Vagina (tissue), 2 donors: ENCODE measurements at regions of chr13 and their contacts with region 1.

Region 1: GRCh38 chr13:45047394-45048310 is 58.3 kb downstream of the GPALPP1 start:
- DNase-seq: no peak
- H3K4me3 ChIP-seq: peak overlapping the region; percentile 30 to 36
- H3K27ac ChIP-seq: no peak overlapping the region
- H3K4me1 ChIP-seq: peaks cover 17% of the 10 kb centered on the region
- H3K27me3 ChIP-seq: no peaks in the 10 kb centered on the region
- CTCF ChIP-seq: peak; percentile 80 to 88 (median 88)
- POLR2A ChIP-seq: no peak

Region 2: GRCh38 chr13:44894001-44894780 is 153.5 kb before region 1 on chr13:
- intact Hi-C with region 1: no loop called
- DNase-seq: no peak
- H3K4me3 ChIP-seq: no peak overlapping the region
- H3K27ac ChIP-seq: no peak overlapping the region
- H3K4me1 ChIP-seq: no peaks in the 10 kb centered on the region
- H3K27me3 ChIP-seq: no peaks in the 10 kb centered on the region
- CTCF ChIP-seq: no peak
- POLR2A ChIP-seq: no peak

Region 3: DNA sequence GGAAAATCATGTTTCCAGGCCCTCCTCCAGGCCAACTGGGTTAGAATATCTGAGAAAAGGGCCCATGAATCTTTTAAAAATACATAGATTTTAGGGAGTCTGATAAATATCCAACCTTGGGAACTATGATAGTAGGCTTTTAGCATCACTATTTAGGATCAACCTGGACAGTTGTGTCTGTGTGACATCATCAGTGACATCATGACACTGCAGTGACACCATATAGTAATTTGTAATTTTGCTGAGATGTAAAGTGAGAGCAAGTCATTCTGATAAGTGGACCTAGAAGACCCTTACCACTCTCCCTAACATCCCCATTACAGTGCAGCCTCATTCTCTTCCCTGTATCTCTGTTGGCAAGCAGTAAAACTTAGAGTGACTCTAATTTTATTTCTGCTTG is 44.2 kb before region 1 on chr13:
- intact Hi-C with region 1: no loop called
- DNase-seq: no peak
- H3K4me3 ChIP-seq: no peak overlapping the region
- H3K27ac ChIP-seq: no peak overlapping the region
- H3K4me1 ChIP-seq: no peaks in the 10 kb centered on the region
- H3K27me3 ChIP-seq: no peaks in the 10 kb centered on the region
- CTCF ChIP-seq: no peak
- POLR2A ChIP-seq: no peak

Region 4: GRCh38 chr13:45206340-45206739 is 158.7 kb after region 1 on chr13:
- intact Hi-C with region 1: no loop called
- DNase-seq: no peak
- H3K4me3 ChIP-seq: no peak overlapping the region
- H3K27ac ChIP-seq: peak overlapping the region; percentile 27
- H3K4me1 ChIP-seq: peaks cover 27% of the 10 kb centered on the region
- H3K27me3 ChIP-seq: no peaks in the 10 kb centered on the region
- CTCF ChIP-seq: no peak
- POLR2A ChIP-seq: no peak

Region 5: GRCh38 chr13:45301243-45301642 is 253.6 kb after region 1 on chr13:
- intact Hi-C with region 1: loop called (anchors 10 kb)
- DNase-seq: no peak
- H3K4me3 ChIP-seq: no peak overlapping the region
- H3K27ac ChIP-seq: no peak overlapping the region
- H3K4me1 ChIP-seq: no peaks in the 10 kb centered on the region
- H3K27me3 ChIP-seq: no peaks in the 10 kb centered on the region
- CTCF ChIP-seq: no peak
- POLR2A ChIP-seq: no peak